ENCODE measurements at regions of chr2 and their contacts with region 1.

Region 1: DNA sequence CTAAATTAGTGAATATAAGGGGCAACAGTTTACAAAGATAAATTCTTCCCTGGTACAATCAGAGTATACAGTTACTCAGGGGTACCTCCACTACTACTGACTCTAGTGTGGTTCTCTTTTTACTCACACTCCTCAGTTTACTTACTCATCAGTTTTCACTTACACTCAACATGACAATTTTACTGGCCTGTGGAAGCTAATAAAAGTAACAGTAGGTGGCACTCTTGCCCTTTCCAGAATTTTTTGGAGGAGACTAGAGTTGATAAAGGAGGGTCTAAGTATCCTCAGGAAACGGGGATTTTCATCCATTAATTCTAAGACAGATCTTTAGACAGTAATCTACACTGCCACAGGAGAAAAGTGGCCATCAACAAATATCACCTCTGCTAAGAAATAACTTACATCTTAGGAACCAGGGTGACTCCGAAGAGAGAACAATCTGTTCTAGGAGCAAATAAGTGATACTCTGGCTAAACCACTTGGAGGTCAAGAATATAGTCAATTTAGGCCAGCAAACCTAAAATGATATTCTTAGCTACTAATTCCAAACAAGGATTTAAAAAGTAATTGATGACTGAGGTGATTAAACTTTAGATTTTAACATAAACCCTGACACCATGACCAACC is 61.3 kb downstream of the ATL2 start:
- DNase-seq: peak in 1 of 2 donors; percentile 32
- ATAC-seq: peak in 7 of 8 donors; percentile 33 to 73 (median 65)
- H3K4me3 ChIP-seq: no peak overlapping the region
- H3K27ac ChIP-seq: no peak overlapping the region
- H3K4me1 ChIP-seq: peaks cover 0 to 10% (median 0%) of the 10 kb centered on the region in 9 donors
- H3K27me3 ChIP-seq: no peaks in the 10 kb centered on the region
- CTCF ChIP-seq: peak; percentile 67 to 88 (median 81)

Region 2: GRCh38 chr2:38030635-38031355 is 285.0 kb before region 1 on chr2:
- intact Hi-C with region 1: no loop called
- DNase-seq: no peak
- ATAC-seq: peak in 2 of 8 donors; percentile 39 to 50
- H3K4me3 ChIP-seq: no peak overlapping the region
- H3K27ac ChIP-seq: no peak overlapping the region
- H3K4me1 ChIP-seq: peaks cover 0 to 12% (median 5%) of the 10 kb centered on the region in 9 donors
- H3K27me3 ChIP-seq: peaks cover 0 to 16% (median 0%) of the 10 kb centered on the region in 7 donors
- CTCF ChIP-seq: no peak

Region 3: GRCh38 chr2:38260469-38260868 is 55.4 kb before region 1 on chr2:
- intact Hi-C with region 1: no loop called
- DNase-seq: no peak
- ATAC-seq: peak in 1 of 8 donors; percentile 30
- H3K4me3 ChIP-seq: peak overlapping the region in 2 of 10 donors; percentile 17 to 26
- H3K27ac ChIP-seq: peak overlapping the region in 3 of 10 donors; percentile 43 to 66 (median 45)
- H3K4me1 ChIP-seq: peaks cover 0 to 40% (median 0%) of the 10 kb centered on the region in 9 donors
- H3K27me3 ChIP-seq: no peaks in the 10 kb centered on the region
- CTCF ChIP-seq: no peak

Region 4: DNA sequence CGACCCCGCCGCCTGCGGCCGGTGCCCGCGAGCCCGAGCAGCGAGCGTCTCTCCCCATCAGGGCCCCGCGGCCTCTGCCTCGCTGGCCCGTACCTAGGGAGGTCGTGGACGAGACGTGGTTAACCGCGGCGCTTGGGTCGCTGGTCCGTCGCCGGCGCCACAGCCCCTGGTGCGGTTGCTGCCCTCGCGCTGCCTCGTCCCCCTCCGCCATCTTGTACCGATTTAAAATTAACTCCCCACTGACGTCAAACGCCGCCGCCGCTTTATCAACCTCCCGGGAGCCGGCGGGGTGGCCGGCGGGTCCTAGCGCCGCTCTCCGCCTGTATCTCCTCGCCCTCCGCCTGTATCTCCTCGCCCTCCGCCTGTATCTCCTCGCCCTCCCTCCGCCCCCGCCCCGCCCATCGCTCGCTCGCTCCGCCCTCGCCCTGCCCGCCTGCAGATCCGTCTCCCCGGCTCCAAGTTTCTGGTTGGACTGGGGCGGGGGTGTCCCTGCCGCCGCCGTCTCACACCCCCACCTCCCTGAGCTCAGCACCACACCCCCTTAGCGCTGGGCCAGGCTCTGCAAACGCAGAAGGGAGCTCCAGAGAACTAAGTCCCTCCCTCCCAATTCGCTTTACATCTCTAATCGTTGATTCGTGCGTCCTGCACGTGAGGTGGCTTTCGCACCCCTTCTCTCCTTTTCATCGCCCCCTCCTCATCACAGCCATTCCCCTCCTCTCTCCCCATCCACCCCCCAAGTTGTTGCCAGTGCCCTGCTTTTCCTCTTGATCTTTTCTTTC is 61.4 kb after region 1 on chr2 and contains the start of gene ATL2:
- intact Hi-C with region 1: loop called in 4 of 10 experiments (anchors 5 to 10 kb)
- DNase-seq: peak; percentile 96 to 97
- ATAC-seq: peak; percentile 93 to 97 (median 94)
- H3K4me3 ChIP-seq: peak within 1 kb of the TSS; percentile 87 to 100 (median 94)
- H3K27ac ChIP-seq: peak within 1 kb of the TSS; percentile 94 to 100 (median 99)
- H3K4me1 ChIP-seq: peaks cover 0 to 54% (median 34%) of the 10 kb centered on the region in 9 donors
- H3K27me3 ChIP-seq: no peaks in the 10 kb centered on the region
- CTCF ChIP-seq: no peak
- total RNA-seq, gene ATL2: 24.4 to 46.2 (median 31.3) TPM

Region 5: GRCh38 chr2:38446420-38446819 is 130.6 kb after region 1 on chr2:
- intact Hi-C with region 1: loop called in 2 of 10 experiments (anchors 5 to 10 kb)
- DNase-seq: peak in 1 of 2 donors; percentile 8
- ATAC-seq: peak in 4 of 8 donors; percentile 25 to 58 (median 42)
- H3K4me3 ChIP-seq: no peak overlapping the region
- H3K27ac ChIP-seq: no peak overlapping the region
- H3K4me1 ChIP-seq: peaks cover 0 to 26% (median 15%) of the 10 kb centered on the region in 9 donors
- H3K27me3 ChIP-seq: no peaks in the 10 kb centered on the region
- CTCF ChIP-seq: peak in 7 of 9 donors; percentile 17 to 53 (median 28)

Region 6: GRCh38 chr2:38498045-38498481 is 182.2 kb after region 1 on chr2:
- intact Hi-C with region 1: loop called in 4 of 10 experiments (anchors 5 to 10 kb)
- DNase-seq: peak; percentile 17 to 72
- ATAC-seq: peak in 7 of 8 donors; percentile 28 to 81 (median 70)
- H3K4me3 ChIP-seq: no peak overlapping the region
- H3K27ac ChIP-seq: peak overlapping the region in 5 of 10 donors; percentile 48 to 61 (median 55)
- H3K4me1 ChIP-seq: peaks cover 0 to 41% (median 14%) of the 10 kb centered on the region in 9 donors
- H3K27me3 ChIP-seq: no peaks in the 10 kb centered on the region
- CTCF ChIP-seq: no peak

Region 7: DNA sequence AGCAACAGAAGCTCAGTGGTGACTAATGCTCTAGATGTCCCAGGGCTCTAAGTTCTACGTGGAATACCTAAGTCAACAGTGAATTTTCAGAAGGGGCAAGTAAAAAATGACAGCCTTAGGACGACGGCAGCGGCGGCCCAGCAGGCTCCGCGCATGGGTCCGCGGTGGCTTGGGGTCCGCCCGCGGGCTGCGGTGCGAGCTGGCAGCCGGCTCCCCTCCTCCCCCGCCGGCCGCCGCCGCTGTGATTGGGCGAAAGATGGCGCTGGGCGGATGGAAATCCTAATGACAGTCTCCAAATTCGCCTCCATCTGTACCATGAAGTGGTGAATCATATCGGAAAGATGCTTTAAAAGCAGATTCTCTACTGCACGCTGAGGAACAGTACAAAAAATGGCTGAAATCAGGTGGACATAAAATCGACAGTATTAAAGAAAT is 212.2 kb after region 1 on chr2:
- intact Hi-C with region 1: loop called in 1 of 10 experiments (anchors 10 kb)
- DNase-seq: peak; percentile 33 to 40
- ATAC-seq: peak; percentile 46 to 73 (median 60)
- H3K4me3 ChIP-seq: peak overlapping the region; percentile 3 to 55 (median 43)
- H3K27ac ChIP-seq: peak overlapping the region in 3 of 10 donors; percentile 40 to 70 (median 67)
- H3K4me1 ChIP-seq: peaks cover 0 to 18% (median 0%) of the 10 kb centered on the region in 9 donors
- H3K27me3 ChIP-seq: peaks cover 0 to 27% (median 0%) of the 10 kb centered on the region in 7 donors
- CTCF ChIP-seq: peak in 2 of 9 donors; percentile 4 to 25

Region 8: DNA sequence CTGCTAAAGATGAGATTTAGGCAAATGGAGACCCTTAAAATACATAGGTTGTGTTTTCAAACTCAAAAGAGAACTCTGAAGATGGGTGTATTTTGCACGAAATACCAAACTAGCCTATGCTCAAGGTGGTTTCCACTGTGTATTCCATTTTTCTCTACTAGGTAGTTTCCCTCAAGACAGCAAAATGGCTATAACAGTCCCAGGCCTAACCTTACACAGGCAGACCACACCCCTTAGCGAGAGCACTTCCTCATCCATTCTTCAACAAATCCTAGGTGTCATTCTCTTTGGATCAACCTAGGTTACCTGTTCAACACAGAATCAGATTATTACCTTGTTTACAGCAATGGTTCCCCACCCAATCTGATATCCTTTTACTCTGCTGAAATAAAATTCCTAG is 244.3 kb after region 1 on chr2:
- intact Hi-C with region 1: loop called in 1 of 10 experiments (anchors 10 kb)
- DNase-seq: no peak
- ATAC-seq: no peak
- H3K4me3 ChIP-seq: no peak overlapping the region
- H3K27ac ChIP-seq: no peak overlapping the region
- H3K4me1 ChIP-seq: peaks cover 0 to 20% (median 0%) of the 10 kb centered on the region in 9 donors
- H3K27me3 ChIP-seq: no peaks in the 10 kb centered on the region
- CTCF ChIP-seq: no peak

Region 9: DNA sequence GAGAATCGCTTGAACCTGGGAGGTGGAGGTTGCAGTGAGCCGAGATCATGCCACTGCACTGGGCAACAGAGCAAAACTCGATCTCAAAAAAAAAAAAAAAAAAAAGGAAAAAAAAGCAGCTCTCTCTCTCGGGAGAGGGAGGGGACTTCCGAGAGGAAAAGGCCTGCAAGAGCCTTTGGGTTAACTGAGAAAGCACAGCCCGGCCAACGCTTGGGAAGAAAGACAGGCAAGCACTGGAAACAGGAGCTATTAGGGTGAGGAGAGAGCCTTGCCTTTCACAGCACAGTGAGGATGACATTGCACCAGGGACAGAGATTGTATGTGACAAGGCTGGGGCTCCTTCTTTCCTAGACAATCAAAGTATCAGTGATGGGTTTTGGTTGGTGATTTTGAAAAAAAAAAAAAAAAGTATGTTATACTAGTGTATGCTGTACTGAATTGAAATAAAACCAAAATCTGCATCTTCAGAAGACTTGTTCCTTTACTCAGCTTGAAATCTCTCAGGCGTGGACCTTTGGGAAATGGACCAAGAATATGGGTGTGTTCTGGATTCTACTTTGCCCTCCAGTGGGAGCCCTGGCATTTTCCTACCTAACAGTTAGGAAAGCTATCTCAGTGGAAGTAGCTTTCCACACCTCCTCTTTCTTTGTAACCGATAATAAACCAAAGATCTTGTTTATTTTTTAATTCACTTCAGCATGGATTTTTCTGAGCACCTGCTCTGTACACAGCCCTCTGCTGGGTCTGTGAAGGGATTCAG is 418.7 kb after region 1 on chr2:
- intact Hi-C with region 1: loop called in 6 of 10 experiments (anchors 2 to 10 kb)
- DNase-seq: peak in 1 of 2 donors; percentile 55
- ATAC-seq: peak in 6 of 8 donors; percentile 50 to 64 (median 56)
- H3K4me3 ChIP-seq: no peak overlapping the region
- H3K27ac ChIP-seq: peak overlapping the region in 1 of 10 donors; percentile 9
- H3K4me1 ChIP-seq: peaks cover 0 to 37% (median 18%) of the 10 kb centered on the region in 9 donors
- H3K27me3 ChIP-seq: no peaks in the 10 kb centered on the region
- CTCF ChIP-seq: no peak

Measured in heart right ventricle (tissue), 16 donors.